CD8-positive, alpha-beta T cell (primary cell): ENCODE measurements at regions of chr11 and their contacts with region 1.

Region 1: GRCh38 chr11:94613120-94613519 is 46.0 kb downstream of the PIWIL4 start:
- DNase-seq: no peak
- ATAC-seq: no peak
- H3K4me3 ChIP-seq: no peak overlapping the region
- H3K4me3 Mint-ChIP-seq: no peak overlapping the region
- H3K27ac ChIP-seq: no peak overlapping the region
- H3K27ac Mint-ChIP-seq: no peak overlapping the region
- H3K4me1 ChIP-seq: no peaks in the 10 kb centered on the region
- H3K4me1 Mint-ChIP-seq: no peaks in the 10 kb centered on the region
- H3K27me3 ChIP-seq: no peaks in the 10 kb centered on the region
- H3K27me3 Mint-ChIP-seq: no peaks in the 10 kb centered on the region
- CTCF ChIP-seq: no peak

Region 2: GRCh38 chr11:94332814-94333213 is 280.3 kb before region 1 on chr11:
- CTCF ChIA-PET with region 1: no interaction called
- POLR2A ChIA-PET with region 1: no interaction called
- intact Hi-C with region 1: no loop called
- DNase-seq: no peak
- ATAC-seq: no peak
- H3K4me3 ChIP-seq: no peak overlapping the region
- H3K4me3 Mint-ChIP-seq: no peak overlapping the region
- H3K27ac ChIP-seq: no peak overlapping the region
- H3K27ac Mint-ChIP-seq: no peak overlapping the region
- H3K4me1 ChIP-seq: no peaks in the 10 kb centered on the region
- H3K4me1 Mint-ChIP-seq: no peaks in the 10 kb centered on the region
- H3K27me3 ChIP-seq: no peaks in the 10 kb centered on the region
- H3K27me3 Mint-ChIP-seq: peaks cover 14% of the 10 kb centered on the region
- CTCF ChIP-seq: no peak

Region 3: GRCh38 chr11:94926698-94927237 is 313.6 kb after region 1 on chr11:
- CTCF ChIA-PET with region 1: no interaction called
- POLR2A ChIA-PET with region 1: no interaction called
- intact Hi-C with region 1: no loop called
- DNase-seq: no peak
- ATAC-seq: no peak
- H3K4me3 ChIP-seq: no peak overlapping the region
- H3K4me3 Mint-ChIP-seq: no peak overlapping the region
- H3K27ac ChIP-seq: no peak overlapping the region
- H3K27ac Mint-ChIP-seq: no peak overlapping the region
- H3K4me1 ChIP-seq: peaks cover 37% of the 10 kb centered on the region
- H3K4me1 Mint-ChIP-seq: peaks cover 49% of the 10 kb centered on the region
- H3K27me3 ChIP-seq: no peaks in the 10 kb centered on the region
- H3K27me3 Mint-ChIP-seq: peaks cover 2% of the 10 kb centered on the region
- CTCF ChIP-seq: no peak

Region 4: DNA sequence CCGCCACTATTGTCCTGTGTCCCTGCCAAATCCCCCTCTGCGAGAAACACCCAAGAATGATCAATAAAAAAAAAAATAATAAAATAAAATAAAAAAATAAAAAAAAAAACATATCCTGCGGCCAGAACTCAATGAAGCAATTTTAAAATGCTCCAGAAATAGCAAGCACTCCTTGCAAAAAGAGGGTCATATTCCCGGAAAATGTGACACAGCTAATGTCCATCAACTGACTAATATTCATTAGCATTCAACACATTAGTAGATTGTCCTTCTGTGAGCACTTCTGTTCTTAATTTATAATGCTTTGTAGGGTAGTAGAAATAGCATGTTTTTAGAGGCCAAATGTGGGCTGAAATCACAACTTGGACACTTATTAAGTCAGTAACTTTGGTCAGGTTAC is 870.2 kb after region 1 on chr11:
- CTCF ChIA-PET with region 1: no interaction called
- POLR2A ChIA-PET with region 1: no interaction called
- intact Hi-C with region 1: loop called in 1 of 2 experiments (anchors 5 kb)
- DNase-seq: no peak
- ATAC-seq: no peak
- H3K4me3 ChIP-seq: no peak overlapping the region
- H3K4me3 Mint-ChIP-seq: no peak overlapping the region
- H3K27ac ChIP-seq: no peak overlapping the region
- H3K27ac Mint-ChIP-seq: no peak overlapping the region
- H3K4me1 ChIP-seq: no peaks in the 10 kb centered on the region
- H3K4me1 Mint-ChIP-seq: no peaks in the 10 kb centered on the region
- H3K27me3 ChIP-seq: no peaks in the 10 kb centered on the region
- H3K27me3 Mint-ChIP-seq: no peaks in the 10 kb centered on the region
- CTCF ChIP-seq: no peak